GM10248 (cell line): ENCODE measurements at regions of chr7 and their contacts with region 1.

Region 1: GRCh38 chr7:101410743-101411507 is 48.2 kb downstream of the COL26A1 start:
- DNase-seq: peak; percentile 77
- CTCF ChIP-seq: peak; percentile 86

Region 2: GRCh38 chr7:101363734-101364374 is 47.1 kb before region 1 on chr7:
- CTCF ChIA-PET with region 1: interaction called, 25 read pairs
- POLR2A ChIA-PET with region 1: no interaction called
- DNase-seq: peak; percentile 87
- CTCF ChIP-seq: peak; percentile 79

Region 3: DNA sequence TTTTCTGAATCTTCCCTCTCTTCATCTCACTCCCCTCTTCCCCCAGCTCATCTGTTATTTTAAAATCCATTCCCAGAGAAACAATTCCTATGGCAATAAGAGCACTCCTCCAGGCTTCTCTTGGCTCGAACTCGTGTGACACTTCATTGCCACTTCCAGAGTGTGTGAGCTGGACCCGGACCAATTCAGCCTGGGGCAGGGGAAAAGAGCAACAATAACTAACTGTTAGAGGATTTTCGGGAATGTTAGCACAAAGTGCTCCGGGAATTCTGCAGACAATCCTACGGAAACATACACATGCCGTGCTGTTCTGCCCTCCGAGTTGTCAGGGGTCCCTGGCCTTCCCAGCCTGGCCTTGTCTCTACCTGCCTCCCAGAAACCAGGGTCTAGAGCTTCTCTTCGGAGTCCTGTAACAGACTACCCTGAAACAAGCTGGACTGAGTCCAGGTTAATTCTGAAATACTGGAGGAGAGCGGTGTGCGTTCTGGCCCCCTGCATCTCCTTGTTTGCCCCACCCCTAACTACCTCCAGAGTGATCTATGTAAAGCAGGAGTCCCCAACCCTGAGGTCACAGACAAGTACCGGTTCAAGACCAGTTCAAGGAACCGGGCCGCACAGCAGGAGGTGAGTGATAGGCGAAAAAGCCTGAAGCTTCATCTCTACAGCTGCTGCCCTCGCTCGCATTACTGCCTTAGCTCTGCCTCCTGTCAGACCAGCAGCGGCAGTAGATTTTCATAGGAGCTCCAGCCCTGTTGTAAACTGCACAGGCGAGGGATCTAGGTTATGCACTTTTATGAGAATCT is 36.9 kb before region 1 on chr7:
- CTCF ChIA-PET with region 1: interaction called, 16 read pairs
- POLR2A ChIA-PET with region 1: no interaction called
- DNase-seq: no peak
- CTCF ChIP-seq: no peak

Region 4: DNA sequence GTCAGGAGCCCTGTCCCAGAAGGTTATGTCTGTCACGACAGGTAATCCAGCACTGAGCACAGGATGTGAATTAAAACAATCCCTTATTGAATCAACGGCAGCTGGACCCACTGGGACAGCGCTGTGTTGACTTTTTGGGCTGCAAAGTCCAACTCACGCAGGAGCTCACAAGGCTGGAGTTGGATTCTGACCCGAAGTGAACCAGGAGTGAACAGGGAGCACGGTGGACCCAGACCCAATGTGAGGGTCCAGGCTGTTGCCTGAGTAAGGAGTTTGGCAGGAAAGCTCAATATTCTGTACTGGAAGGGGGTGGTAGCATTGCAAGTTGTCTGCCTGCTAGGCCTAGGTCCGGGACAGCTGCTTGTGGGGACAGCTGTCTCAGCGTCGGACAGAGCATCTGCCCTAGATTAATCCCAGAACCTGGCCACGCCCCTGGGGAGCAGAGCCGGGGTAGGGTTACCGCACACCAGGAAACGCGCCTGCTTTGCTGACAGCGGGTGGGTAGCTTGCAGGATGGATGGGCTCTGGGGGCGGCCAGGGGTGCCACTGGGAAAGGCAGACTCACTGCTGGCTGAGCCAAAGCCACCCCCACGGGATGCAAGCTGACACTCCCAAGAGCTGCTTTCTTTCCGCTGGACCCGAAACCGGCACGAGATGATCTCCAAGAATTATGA is 24.2 kb before region 1 on chr7:
- CTCF ChIA-PET with region 1: interaction called, 13 read pairs
- POLR2A ChIA-PET with region 1: no interaction called
- DNase-seq: no peak
- CTCF ChIP-seq: no peak

Region 5: DNA sequence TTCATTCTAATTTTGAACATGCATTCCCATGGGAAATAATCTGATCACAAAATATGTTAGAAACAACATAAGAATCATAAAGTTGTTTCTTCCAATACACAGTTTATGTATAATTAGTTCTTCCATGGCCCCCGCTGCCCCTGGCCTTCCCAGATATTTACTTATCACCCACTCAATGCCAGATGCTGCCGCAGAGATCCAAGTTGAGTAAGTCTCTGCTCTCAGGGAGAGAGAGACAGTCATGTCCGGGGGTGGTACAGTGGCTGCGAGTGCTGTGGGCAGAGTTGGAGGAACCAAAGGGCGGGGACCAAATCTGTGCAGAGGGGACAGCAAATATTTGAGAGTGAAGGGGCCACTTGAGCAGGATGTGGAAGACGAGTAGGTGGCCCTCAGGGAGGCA is 11.2 kb before region 1 on chr7:
- CTCF ChIA-PET with region 1: interaction called, 20 read pairs
- POLR2A ChIA-PET with region 1: no interaction called
- DNase-seq: no peak
- CTCF ChIP-seq: no peak

Region 6: DNA sequence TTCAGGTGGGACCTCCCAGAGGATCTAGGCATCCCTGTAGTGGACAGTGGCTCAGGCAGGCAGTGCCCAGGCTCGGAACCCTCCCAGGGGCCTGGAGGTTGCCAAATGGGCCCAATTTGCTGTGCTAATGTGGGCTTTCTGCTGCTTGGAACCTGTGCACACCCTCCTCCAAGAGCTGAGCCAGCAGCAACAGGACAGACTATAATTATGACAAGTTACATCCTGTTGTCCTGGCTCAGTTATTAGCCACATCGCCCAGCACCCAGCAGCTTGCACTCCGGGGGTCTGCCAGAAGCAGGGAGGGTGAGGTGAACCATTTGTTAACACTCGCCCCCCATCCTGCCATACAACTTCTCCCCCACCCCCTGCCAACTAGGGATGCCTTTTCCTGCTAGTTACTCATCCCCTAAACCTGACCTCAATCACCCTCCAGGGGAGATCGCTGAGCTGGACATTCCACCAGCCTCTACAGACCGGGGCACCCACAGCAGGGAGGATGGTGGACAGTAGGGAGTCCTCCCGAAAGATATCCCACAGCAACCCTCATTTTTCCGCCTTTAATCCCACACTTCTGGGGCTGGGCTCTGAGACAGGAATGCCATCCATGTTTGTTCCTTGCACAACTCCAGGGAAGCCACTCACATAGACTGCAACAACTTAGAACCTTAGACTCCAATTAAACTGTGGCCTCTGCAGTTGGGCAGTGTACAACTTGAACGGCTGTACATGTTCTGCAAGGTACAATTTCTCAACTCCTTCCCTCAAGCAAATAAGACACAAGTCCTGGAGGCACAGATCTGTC is 226.1 kb after region 1 on chr7:
- CTCF ChIA-PET with region 1: no interaction called
- POLR2A ChIA-PET with region 1: no interaction called
- DNase-seq: no peak
- CTCF ChIP-seq: no peak